Stomach (tissue), 19 donors: ENCODE measurements at regions of chr5 and their contacts with region 1.

Region 1: DNA sequence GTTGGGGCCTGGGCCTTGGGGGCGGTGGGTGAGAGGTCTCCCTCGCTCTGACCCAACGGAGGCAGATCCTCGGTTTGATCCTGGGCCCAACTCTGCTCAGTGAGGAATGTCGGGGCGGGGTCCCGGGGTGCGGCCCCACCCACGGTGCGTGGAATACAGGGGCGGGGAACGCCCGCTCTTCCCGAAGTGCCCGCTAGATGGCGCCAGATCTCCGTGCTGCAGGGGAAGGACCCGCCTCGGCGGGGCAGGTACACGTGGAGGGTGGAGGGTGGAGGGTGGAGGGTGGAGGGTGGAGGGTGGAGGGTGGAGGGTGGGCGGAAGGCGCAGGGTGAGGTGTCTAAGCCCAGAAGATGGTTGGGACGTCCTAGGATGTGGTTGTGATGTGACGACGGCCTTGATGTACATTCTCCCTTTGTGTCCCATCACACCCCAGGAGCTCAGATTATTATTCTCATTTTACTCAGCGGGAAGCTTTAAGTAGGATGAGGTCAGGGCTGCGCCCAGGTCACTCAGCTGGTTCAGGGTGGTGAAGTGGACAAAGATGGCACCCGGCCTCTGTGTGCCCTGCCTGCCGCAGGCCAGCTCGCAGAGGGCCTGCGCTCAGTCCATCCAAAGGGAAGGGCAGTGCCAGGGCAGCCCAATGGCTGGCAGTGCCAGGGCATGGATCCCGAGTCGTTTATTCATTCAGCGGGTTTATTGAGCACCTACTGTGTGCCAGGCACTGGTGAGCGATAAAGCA is 9.4 kb upstream of the RPS14 start:
- DNase-seq: peak; percentile 88 to 91
- H3K4me3 ChIP-seq: peak overlapping the region; percentile 21 to 34 (median 30)
- H3K27ac ChIP-seq: peak overlapping the region in 2 of 5 donors; percentile 54
- H3K4me1 ChIP-seq: peaks cover 0 to 25% (median 10%) of the 10 kb centered on the region in 4 donors
- H3K27me3 ChIP-seq: no peaks in the 10 kb centered on the region
- CTCF ChIP-seq: peak in 5 of 7 experiments; percentile 66 to 94 (median 89)
- EP300 ChIP-seq: no peak
- POLR2A ChIP-seq: no peak

Region 2: GRCh38 chr5:150523472-150524350 is 64.7 kb after region 1 on chr5:
- intact Hi-C with region 1: loop called (anchors 5 kb)
- DNase-seq: peak; percentile 40 to 85
- H3K4me3 ChIP-seq: no peak overlapping the region
- H3K27ac ChIP-seq: peak overlapping the region in 4 of 5 donors; percentile 43 to 52 (median 48)
- H3K4me1 ChIP-seq: peaks cover 34 to 87% (median 62%) of the 10 kb centered on the region in 4 donors
- H3K27me3 ChIP-seq: no peaks in the 10 kb centered on the region
- CTCF ChIP-seq: peak in 5 of 7 experiments; percentile 42 to 62 (median 56)
- EP300 ChIP-seq: no peak
- POLR2A ChIP-seq: no peak

Region 3: DNA sequence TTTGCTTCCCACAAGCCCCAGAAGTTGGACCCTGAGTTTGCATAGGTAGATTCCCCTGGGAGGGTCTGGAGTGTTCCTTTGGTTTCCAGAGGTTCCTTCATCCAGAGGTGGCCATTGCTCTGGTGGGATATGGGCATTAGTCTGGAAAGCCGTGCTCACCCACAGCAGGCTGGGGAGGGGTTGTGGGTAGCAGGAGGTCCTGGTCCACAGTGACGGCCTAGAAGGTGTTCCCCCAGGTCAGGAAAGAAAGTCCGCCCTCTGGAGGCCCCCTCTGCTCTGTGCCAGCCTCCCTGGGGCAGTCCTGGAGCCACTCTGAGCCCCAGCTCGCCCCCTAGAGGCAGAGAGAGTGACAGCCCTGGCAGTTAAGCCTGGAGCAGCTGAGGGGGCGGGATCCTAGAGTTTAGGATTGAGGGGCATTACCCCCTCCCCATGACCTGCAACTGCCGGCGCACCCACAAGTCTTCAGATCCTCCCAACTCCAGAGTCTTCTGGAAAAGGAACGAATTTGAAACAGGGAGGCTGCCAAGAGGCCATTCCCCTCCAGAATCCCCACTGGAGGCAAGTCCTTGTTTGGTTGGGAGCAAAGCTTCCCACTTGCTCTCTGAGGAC is 85.7 kb after region 1 on chr5:
- intact Hi-C with region 1: loop called (anchors 5 kb)
- DNase-seq: peak; percentile 82 to 85
- H3K4me3 ChIP-seq: no peak overlapping the region
- H3K27ac ChIP-seq: peak overlapping the region in 2 of 5 donors; percentile 0 to 31
- H3K4me1 ChIP-seq: peaks cover 15 to 29% (median 19%) of the 10 kb centered on the region in 4 donors
- H3K27me3 ChIP-seq: no peaks in the 10 kb centered on the region
- CTCF ChIP-seq: peak in 5 of 7 experiments; percentile 57 to 90 (median 81)
- EP300 ChIP-seq: no peak
- POLR2A ChIP-seq: no peak